AG04449 (cell line): ENCODE measurements at regions of chr3 and their contacts with region 1.

Region 1: GRCh38 chr3:141231101-141231935 is at the start of gene PXYLP1:
- DNase-seq: no peak
- H3K4me3 ChIP-seq: peak within 1 kb of the TSS; percentile 71
- CTCF ChIP-seq: peak; percentile 57

Region 2: GRCh38 chr3:141192345-141192744 is 39.0 kb before region 1 on chr3:
- CTCF ChIA-PET with region 1: interaction called, 10 read pairs
- POLR2A ChIA-PET with region 1: no interaction called
- DNase-seq: peak; percentile 63
- H3K4me3 ChIP-seq: no peak overlapping the region
- CTCF ChIP-seq: peak; percentile 99

Region 3: DNA sequence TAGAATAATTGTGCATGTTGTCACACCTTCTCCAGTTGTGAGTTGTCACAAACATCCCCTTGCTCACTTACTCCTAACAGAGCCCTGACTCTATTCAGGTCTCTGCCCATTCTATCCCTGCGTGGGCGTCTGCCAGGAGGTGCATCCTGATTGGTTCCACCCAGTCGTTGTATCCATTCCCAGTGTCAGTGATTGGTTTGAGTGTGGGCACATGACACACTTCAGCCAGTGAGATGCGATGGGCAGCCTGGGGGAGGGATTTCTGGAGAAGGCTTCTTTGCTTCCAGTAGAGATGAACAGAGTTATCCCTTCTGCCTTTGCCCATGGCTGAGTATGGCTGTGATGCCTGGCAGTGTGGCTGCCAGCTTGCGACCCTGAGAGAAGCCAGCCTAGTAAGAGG is 19.0 kb after region 1 on chr3:
- CTCF ChIA-PET with region 1: interaction called, 109 read pairs
- POLR2A ChIA-PET with region 1: no interaction called
- DNase-seq: no peak
- H3K4me3 ChIP-seq: no peak overlapping the region
- CTCF ChIP-seq: no peak

Region 4: GRCh38 chr3:141266797-141267555 is 35.7 kb after region 1 on chr3:
- CTCF ChIA-PET with region 1: interaction called, 11 read pairs
- POLR2A ChIA-PET with region 1: no interaction called
- DNase-seq: no peak
- H3K4me3 ChIP-seq: no peak overlapping the region
- CTCF ChIP-seq: no peak

Region 5: GRCh38 chr3:141294848-141295247 is 63.5 kb after region 1 on chr3:
- CTCF ChIA-PET with region 1: interaction called, 11 read pairs
- POLR2A ChIA-PET with region 1: interaction called, 3 read pairs
- DNase-seq: peak; percentile 57
- H3K4me3 ChIP-seq: no peak overlapping the region
- CTCF ChIP-seq: no peak

Region 6: DNA sequence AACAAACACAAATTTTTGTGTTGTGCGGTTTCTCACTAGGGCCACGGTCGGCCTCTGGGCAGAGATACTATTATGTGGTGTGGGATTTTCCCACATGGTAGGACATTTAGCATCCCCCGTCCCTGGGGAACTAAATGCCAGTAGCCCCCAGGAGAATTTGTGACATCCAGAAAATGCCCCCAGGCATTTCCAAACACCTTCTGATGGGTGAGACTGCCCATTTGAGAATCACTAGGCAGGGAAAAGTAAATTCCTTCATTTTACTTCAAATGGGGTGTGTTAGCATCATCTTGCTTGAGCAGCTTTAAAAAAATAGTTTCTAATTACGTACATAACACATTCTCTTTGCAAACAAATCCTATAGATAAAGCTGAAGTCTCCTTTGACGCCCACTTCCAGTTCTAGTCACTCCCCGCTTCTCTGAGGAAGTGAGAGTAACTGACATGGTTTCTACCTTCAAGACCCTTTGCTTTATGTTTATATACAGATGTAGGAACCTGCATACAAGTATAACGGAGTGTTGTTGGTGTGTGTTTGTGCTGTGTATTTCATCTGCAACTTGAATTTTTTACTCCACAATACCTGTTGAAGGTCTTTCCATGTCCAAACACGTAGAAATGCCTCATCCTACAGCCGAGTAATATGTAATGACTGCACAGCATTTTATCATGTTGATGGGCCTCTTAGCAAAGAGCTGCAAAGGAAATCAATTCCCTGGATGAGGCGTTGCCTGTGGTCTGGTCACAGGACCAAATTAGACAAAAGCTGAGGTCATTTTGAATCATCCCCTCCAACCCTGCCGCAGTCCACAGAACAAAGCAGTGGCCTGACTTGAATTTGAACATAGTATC is 105.6 kb after region 1 on chr3:
- CTCF ChIA-PET with region 1: no interaction called
- POLR2A ChIA-PET with region 1: no interaction called
- DNase-seq: no peak
- H3K4me3 ChIP-seq: no peak overlapping the region
- CTCF ChIP-seq: no peak